ENCODE measurements at regions of chr12 and their contacts with region 1.

Region 1: GRCh38 chr12:122860346-122861090 is 25.3 kb downstream of the HIP1R start:
- DNase-seq: peak; percentile 86 to 95 (median 90)
- H3K4me3 ChIP-seq: no peak overlapping the region
- H3K27ac ChIP-seq: peak overlapping the region in 4 of 5 donors; percentile 45 to 91 (median 72)
- H3K4me1 ChIP-seq: peaks cover 12 to 27% of the 10 kb centered on the region in 2 donors
- H3K27me3 ChIP-seq: no peaks in the 10 kb centered on the region
- CTCF ChIP-seq: peak; percentile 88 to 98 (median 98)
- POLR2A ChIP-seq: no peak

Region 2: DNA sequence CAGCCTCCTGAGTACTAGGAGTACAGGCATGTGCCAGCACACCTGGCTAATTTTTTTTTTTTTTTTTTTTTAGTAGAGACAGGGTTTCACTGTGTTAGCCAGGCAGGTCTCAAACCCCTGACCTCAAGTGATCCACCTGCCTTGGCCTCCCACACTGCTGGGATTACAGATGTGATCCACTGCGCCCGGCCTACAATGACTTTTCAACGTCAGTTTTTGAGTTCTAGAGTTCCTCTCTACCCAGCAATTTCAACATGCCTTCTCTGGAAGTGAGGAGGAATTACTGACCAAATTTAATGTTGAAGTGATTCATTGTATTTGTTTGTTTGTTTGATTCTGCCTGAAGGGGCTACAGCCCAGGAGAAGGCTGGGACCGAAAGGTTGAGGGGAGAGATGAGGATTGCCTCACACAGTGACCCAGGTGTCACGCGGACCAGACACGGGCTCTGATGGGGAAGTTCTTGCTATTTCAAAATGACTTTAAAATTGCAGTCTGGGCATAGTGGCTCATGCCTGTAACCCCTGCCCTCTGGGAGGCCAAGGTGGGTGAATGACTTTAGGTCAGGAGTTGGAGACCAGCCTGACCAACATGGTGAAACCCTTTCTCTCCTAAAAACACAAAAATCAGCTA is 116.5 kb before region 1 on chr12:
- intact Hi-C with region 1: no loop called
- DNase-seq: peak in 1 of 7 donors; percentile 26
- H3K4me3 ChIP-seq: no peak overlapping the region
- H3K27ac ChIP-seq: no peak overlapping the region
- H3K4me1 ChIP-seq: no peaks in the 10 kb centered on the region
- H3K27me3 ChIP-seq: no peaks in the 10 kb centered on the region
- CTCF ChIP-seq: no peak
- POLR2A ChIP-seq: no peak

Region 3: DNA sequence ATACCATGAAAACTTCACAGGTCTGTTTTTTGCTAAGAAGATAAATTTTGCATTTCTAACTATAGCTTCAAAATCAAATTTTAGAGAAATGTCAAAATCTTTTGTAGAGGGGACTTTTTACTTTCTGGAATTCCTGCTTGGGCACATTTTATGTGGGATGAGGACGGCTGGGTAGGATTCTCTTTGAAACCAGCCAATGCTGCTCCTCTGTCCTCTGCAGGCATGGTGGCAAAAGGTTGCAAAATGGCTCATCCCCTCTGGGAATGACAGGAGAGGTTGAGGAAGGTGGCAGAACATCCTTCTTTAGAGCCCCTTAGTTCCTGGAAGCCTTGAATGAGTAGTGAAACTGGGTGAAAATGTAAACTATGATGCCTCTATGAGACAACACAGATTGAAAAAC is 92.8 kb before region 1 on chr12:
- intact Hi-C with region 1: no loop called
- DNase-seq: no peak
- H3K4me3 ChIP-seq: no peak overlapping the region
- H3K27ac ChIP-seq: no peak overlapping the region
- H3K4me1 ChIP-seq: no peaks in the 10 kb centered on the region
- H3K27me3 ChIP-seq: no peaks in the 10 kb centered on the region
- CTCF ChIP-seq: no peak
- POLR2A ChIP-seq: no peak

Region 4: DNA sequence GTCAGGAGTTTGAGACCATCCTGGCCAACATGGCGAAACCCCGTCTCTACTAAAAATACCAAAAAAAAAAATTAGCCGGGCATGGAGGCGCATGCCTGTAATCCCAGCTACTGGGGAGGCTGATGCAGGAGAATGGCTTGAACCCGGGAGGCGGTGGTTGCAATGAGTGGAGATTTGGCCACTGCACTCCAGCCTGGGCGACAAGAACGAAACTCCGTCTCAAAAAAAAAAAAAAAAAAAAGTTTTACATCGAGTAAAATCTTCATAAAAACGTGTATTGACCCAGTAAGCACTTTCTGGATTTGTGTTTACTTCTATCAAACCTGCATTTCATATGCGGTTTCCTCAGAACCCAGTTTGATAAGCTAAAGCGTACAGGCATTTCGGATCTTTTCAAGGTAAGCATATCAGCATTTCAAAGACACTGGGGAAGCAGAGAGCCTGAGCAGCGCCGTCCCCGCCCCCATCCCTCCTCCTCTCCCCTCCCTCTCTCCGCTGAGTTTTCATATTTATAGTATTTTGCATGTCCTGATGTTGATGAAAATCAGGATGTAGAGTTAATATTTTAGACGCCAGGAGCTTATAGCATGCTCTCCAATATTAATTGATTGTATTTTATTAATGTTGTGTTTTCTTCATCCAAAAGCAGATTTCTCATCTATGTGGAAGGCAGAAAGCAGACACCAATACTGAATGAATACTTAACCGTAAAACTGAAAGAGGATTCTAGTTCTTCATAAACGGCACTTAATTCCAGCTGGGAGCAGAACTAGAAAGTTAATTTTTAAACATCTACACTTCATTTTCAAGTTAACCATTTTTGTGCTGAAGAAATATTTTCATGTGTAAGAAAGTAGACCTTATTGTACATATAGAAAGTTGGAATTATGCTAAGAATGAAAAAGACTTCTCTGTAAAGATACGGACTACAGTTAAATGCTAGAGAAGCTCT is 34.5 kb before region 1 on chr12:
- intact Hi-C with region 1: no loop called
- DNase-seq: peak in 3 of 7 donors; percentile 36 to 54 (median 45)
- H3K4me3 ChIP-seq: peak overlapping the region in 2 of 4 donors; percentile 2 to 43
- H3K27ac ChIP-seq: no peak overlapping the region
- H3K4me1 ChIP-seq: peaks cover 0 to 10% of the 10 kb centered on the region in 2 donors
- H3K27me3 ChIP-seq: no peaks in the 10 kb centered on the region
- CTCF ChIP-seq: no peak
- POLR2A ChIP-seq: no peak

Region 5: GRCh38 chr12:122951979-122952892 is 91.7 kb after region 1 on chr12:
- intact Hi-C with region 1: loop called (anchors 2 kb)
- DNase-seq: peak; percentile 73 to 91 (median 81)
- H3K4me3 ChIP-seq: no peak overlapping the region
- H3K27ac ChIP-seq: no peak overlapping the region
- H3K4me1 ChIP-seq: peaks cover 2% of the 10 kb centered on the region in 2 donors
- H3K27me3 ChIP-seq: no peaks in the 10 kb centered on the region
- CTCF ChIP-seq: peak; percentile 67 to 96 (median 92)
- POLR2A ChIP-seq: no peak

Region 6: GRCh38 chr12:122999196-122999950 is 138.9 kb after region 1 on chr12:
- intact Hi-C with region 1: no loop called
- DNase-seq: no peak
- H3K4me3 ChIP-seq: no peak overlapping the region
- H3K27ac ChIP-seq: no peak overlapping the region
- H3K4me1 ChIP-seq: no peaks in the 10 kb centered on the region
- H3K27me3 ChIP-seq: no peaks in the 10 kb centered on the region
- CTCF ChIP-seq: no peak
- POLR2A ChIP-seq: no peak